T-cell (primary cell): ENCODE measurements at regions of chr11 and their contacts with region 1.

Region 1: DNA sequence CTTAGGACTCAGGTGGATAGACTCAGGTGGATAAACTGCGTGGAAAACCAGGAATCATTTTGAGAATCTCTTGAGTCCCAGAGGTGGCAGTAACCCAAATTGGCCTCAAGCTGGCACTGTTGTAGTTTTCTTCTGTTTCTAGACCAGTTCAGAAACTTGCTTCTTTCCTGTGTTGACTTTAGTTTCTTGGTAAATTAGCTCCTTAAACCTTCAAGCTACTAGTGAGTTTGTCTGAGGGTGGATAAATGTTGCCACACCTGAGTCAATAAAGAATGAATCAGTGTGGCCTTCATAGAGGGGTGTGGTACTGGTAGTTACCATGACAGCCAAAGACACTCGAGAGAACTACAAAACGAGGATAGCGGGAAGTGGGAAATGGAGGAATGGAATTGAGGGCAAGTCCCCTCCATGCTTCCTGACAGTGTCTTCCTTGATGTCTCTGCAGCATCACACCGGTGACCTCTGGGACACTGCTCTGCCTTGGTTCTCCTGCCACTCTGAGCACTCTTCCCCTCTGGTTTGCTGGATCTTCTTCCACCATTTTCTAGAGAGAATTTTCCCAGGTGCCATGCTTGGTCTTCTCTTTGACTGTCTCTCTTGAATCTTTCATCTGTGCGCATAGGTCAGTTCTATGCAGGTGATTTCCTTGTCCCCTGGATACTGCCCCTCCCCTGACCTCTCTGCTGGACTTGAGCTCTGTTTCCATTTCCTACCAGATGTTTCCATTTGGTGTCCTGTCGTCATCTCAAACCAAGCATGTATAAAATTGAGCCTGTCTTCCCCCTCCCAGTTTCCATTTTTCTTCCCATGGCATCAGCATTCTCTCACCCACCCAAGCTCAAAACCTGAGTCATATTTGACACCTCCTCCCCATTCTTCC is 7.2 kb downstream of the POLD4 start:
- DNase-seq: peak in 2 of 35 experiments; percentile 39 to 60
- ATAC-seq: peak; percentile 56 to 70 (median 62)
- H3K4me3 ChIP-seq: no peak overlapping the region
- H3K4me3 Mint-ChIP-seq: peak overlapping the region in 1 of 3 donors; percentile 67
- H3K27ac ChIP-seq: no peak overlapping the region
- H3K27ac Mint-ChIP-seq: peak overlapping the region; percentile 96 to 98
- H3K4me1 ChIP-seq: peaks cover 22 to 46% of the 10 kb centered on the region in 2 experiments
- H3K4me1 Mint-ChIP-seq: peaks cover 53 to 59% (median 54%) of the 10 kb centered on the region in 3 donors
- H3K27me3 ChIP-seq: no peaks in the 10 kb centered on the region
- H3K27me3 Mint-ChIP-seq: no peaks in the 10 kb centered on the region

Region 2: DNA sequence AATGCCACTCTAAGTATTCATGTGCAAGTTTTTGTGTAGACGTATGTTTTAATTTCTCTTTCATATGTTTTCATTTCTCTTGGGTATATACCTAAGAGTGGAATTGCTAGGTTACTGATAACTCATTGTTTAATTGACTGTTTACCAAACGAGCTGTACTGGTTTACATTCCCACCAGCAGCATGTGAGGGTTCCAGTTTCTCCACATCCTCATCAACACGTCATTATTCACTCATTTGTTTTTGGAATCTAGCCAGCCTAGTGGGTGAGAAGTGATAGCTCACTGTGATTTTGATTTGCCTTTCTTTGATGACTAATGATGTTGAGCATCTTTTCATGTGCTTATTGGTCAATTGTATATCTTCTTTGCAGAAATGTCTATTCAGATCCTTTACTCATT is 53.1 kb before region 1 on chr11:
- CTCF ChIA-PET with region 1: interaction called in 1 of 2 experiments, 10 read pairs
- POLR2A ChIA-PET with region 1: no interaction called
- DNase-seq: peak in 2 of 35 experiments; percentile 49 to 70
- ATAC-seq: no peak
- H3K4me3 ChIP-seq: no peak overlapping the region
- H3K4me3 Mint-ChIP-seq: peak overlapping the region; percentile 8 to 45 (median 32)
- H3K27ac ChIP-seq: peak overlapping the region; percentile 62
- H3K27ac Mint-ChIP-seq: peak overlapping the region; percentile 60 to 82
- H3K4me1 ChIP-seq: peaks cover 10 to 38% of the 10 kb centered on the region in 2 experiments
- H3K4me1 Mint-ChIP-seq: peaks cover 49 to 56% (median 52%) of the 10 kb centered on the region in 3 donors
- H3K27me3 ChIP-seq: no peaks in the 10 kb centered on the region
- H3K27me3 Mint-ChIP-seq: no peaks in the 10 kb centered on the region

Region 3: DNA sequence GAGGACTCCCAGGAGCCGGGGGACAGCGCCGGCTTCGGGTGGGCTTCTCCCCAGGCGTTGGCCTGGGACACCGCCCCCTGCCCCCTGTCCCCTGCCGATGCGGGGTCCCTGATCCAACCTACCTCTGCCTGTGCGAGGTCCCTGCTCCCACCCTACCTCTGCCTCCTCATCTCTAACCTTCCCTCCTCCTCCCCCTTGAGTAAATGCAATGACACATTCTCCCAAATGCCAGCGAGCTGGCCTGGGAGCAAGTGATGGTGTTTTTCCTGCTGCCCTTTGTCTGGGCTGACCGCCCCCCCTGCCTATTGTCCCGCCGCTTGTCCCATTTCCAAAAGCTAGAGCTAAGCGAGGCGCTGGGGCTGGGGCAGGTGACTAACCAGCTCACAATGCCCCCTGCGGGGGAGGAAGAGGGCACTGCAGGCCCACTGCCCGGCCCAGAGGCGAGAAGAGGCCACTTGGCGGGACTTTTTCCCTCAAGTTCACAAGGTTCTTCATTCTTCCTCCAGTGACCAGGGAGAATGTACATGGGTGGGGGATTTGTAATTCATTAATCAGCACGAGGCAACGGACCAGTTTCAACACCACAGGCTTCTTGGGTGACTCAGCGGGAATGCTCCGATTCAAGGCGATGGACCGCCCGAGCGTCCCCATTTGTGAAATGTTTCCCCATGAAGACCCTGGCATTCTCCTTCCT is 27.9 kb after region 1 on chr11:
- CTCF ChIA-PET with region 1: interaction called, 3 to 128 read pairs
- POLR2A ChIA-PET with region 1: interaction called in 1 of 2 experiments, 17 read pairs
- DNase-seq: peak in 19 of 35 experiments; percentile 20 to 66 (median 41)
- ATAC-seq: peak; percentile 34 to 46 (median 42)
- H3K4me3 ChIP-seq: peak overlapping the region; percentile 45 to 46
- H3K4me3 Mint-ChIP-seq: peak overlapping the region; percentile 76 to 89 (median 84)
- H3K27ac ChIP-seq: peak overlapping the region; percentile 20
- H3K27ac Mint-ChIP-seq: peak overlapping the region; percentile 63 to 68
- H3K4me1 ChIP-seq: peaks cover 8 to 62% of the 10 kb centered on the region in 2 experiments
- H3K4me1 Mint-ChIP-seq: peaks cover 41 to 48% (median 44%) of the 10 kb centered on the region in 3 donors
- H3K27me3 ChIP-seq: peaks cover 0 to 44% of the 10 kb centered on the region in 2 experiments
- H3K27me3 Mint-ChIP-seq: peaks cover 10 to 17% of the 10 kb centered on the region in 2 donors

Region 4: DNA sequence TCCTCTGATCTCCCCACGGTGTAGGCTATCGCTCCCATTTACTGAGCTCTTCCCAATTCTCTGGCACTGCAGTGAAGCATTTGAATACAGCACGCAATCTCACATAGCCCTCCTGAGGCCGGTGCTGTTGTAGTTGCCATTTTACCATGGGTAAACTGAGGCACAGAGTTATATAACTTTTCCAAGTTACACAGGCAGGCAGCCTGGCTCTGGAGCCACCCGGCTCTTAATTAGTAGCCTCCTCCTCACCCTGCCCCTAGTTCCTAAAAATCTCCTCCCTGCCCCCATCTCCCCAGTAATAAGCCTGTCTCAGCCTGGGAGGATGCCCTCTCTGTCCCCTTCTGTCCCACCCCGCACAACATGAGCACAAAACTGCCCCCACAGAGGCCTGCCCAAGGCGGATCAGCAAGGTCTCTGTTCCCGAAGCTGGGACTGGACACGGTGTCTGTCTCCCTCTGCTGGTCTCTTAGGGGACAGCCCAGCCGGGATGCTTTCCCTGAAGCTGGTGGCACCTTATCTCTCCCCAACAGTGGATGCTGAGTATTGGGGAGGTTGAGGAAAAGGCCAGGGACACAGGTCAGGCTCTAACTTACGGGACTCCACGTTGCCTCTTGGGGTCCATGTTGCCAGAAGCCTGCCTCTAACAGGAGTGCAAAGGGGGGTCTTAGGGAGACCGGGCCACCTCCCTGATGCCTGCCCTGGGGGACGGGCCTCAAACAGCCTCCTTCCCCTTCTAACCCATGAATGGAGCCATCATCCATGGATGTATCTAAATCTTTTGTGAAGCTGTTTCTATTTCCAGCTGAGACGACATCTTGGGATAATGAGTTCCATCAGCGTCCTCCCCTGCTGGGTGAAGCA is 36.3 kb after region 1 on chr11:
- CTCF ChIA-PET with region 1: interaction called, 29 to 128 read pairs
- POLR2A ChIA-PET with region 1: interaction called in 1 of 2 experiments, 4 read pairs
- DNase-seq: peak; percentile 54 to 90 (median 78)
- ATAC-seq: peak; percentile 91 to 95 (median 92)
- H3K4me3 ChIP-seq: no peak overlapping the region
- H3K4me3 Mint-ChIP-seq: no peak overlapping the region
- H3K27ac ChIP-seq: no peak overlapping the region
- H3K27ac Mint-ChIP-seq: peak overlapping the region in 1 of 2 donors; percentile 19
- H3K4me1 ChIP-seq: peaks cover 0 to 8% of the 10 kb centered on the region in 2 experiments
- H3K4me1 Mint-ChIP-seq: peaks cover 5 to 13% (median 5%) of the 10 kb centered on the region in 3 donors
- H3K27me3 ChIP-seq: peaks cover 0 to 14% of the 10 kb centered on the region in 2 experiments
- H3K27me3 Mint-ChIP-seq: peaks cover 3 to 8% of the 10 kb centered on the region in 2 donors